H1 (cell line): ENCODE measurements at regions of chr5 and their contacts with region 1.

Region 1: GRCh38 chr5:141960449-141961202 is 2.6 kb upstream of the PCDH12 start:
- DNase-seq: peak; percentile 50 to 92
- H3K4me3 ChIP-seq: no peak overlapping the region
- H3K27ac ChIP-seq: no peak overlapping the region
- H3K4me1 ChIP-seq: peaks cover 2 to 9% (median 9%) of the 10 kb centered on the region in 4 experiments; a peak in 6 of 7 replicates
- H3K27me3 ChIP-seq: no peaks in the 10 kb centered on the region; a peak in 1 of 7 replicates
- CTCF ChIP-seq: peak; percentile 80 to 91 (median 88)
- EP300 ChIP-seq: no peak
- POLR2A ChIP-seq: no peak
- RAD21 ChIP-seq: peak; percentile 87

Region 2: GRCh38 chr5:141681695-141682641 is 278.7 kb before region 1 on chr5 and contains the start of gene ARAP3:
- CTCF ChIA-PET with region 1: interaction called, 18 read pairs
- POLR2A ChIA-PET with region 1: interaction called, 5 read pairs
- DNase-seq: peak in 1 of 2 experiments; percentile 88
- H3K4me3 ChIP-seq: peak within 1 kb of the TSS; percentile 60 to 73 (median 67)
- H3K27ac ChIP-seq: peak within 1 kb of the TSS; percentile 37; the same call in 1 of the 2 replicates
- H3K4me1 ChIP-seq: peaks cover 10 to 29% (median 20%) of the 10 kb centered on the region in 4 experiments
- H3K27me3 ChIP-seq: no peaks in the 10 kb centered on the region
- CTCF ChIP-seq: no peak
- EP300 ChIP-seq: no peak
- POLR2A ChIP-seq: no peak
- RAD21 ChIP-seq: no peak
- total RNA-seq, gene ARAP3: 45.7 and 48.6 TPM in 2 replicates

Region 3: DNA sequence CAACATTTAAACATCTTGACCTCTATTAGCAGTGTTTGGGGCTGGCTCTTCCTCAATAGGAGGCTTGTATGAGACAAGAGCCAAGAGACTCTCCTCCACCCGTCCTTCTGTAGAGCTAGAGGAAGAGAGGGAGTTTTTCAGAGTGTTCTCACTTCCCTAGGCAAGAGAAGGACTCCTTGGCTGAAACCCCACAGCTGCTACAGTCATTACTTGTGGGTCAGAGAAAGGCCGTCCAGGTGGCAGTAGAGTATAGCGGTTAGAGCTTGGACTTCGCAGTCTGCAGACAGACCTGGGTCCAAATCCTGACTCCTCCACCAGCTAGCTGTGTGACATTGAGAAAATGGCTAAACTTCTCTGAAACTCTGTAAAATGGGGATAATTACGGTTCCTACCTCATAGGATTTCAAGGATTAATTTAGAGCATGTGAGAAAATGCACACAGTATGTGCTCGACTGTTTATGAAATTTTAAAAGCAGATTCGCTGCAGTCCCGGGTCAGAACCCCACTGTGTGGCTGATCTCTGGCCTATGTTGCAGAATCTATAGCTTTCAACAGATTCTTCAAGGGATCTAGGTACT is 197.7 kb before region 1 on chr5:
- CTCF ChIA-PET with region 1: interaction called, 10 read pairs
- POLR2A ChIA-PET with region 1: no interaction called
- DNase-seq: no peak
- H3K4me3 ChIP-seq: no peak overlapping the region
- H3K27ac ChIP-seq: no peak overlapping the region
- H3K4me1 ChIP-seq: peaks cover 10 to 24% (median 21%) of the 10 kb centered on the region in 4 experiments
- H3K27me3 ChIP-seq: no peaks in the 10 kb centered on the region; a peak in 1 of 7 replicates
- CTCF ChIP-seq: peak in 1 of 3 experiments; percentile 18; a peak in 1 of 4 replicates
- EP300 ChIP-seq: no peak
- POLR2A ChIP-seq: no peak
- RAD21 ChIP-seq: peak; percentile 37 to 58; a peak in 3 of 4 replicates

Region 4: GRCh38 chr5:141914199-141914743 is 46.4 kb before region 1 on chr5:
- CTCF ChIA-PET with region 1: interaction called, 30 read pairs
- POLR2A ChIA-PET with region 1: interaction called, 3 read pairs
- DNase-seq: peak in 1 of 2 experiments; percentile 77
- H3K4me3 ChIP-seq: peak overlapping the region; percentile 5 to 64 (median 47)
- H3K27ac ChIP-seq: no peak overlapping the region
- H3K4me1 ChIP-seq: peaks cover 4 to 10% (median 6%) of the 10 kb centered on the region in 4 experiments; a peak in 6 of 7 replicates
- H3K27me3 ChIP-seq: peaks cover 3 to 17% (median 7%) of the 10 kb centered on the region in 4 experiments
- CTCF ChIP-seq: peak in 2 of 3 experiments; percentile 12 to 13; a peak in 3 of 4 replicates
- EP300 ChIP-seq: 0 out of 3 replicates have a peak, but pooled peaks of 1 of the 2 experiments have one; percentile 21
- POLR2A ChIP-seq: peak in 1 of 2 experiments; percentile 50; a peak in 1 of 3 replicates
- RAD21 ChIP-seq: peak; percentile 36 to 45; a peak in 3 of 4 replicates

Region 5: DNA sequence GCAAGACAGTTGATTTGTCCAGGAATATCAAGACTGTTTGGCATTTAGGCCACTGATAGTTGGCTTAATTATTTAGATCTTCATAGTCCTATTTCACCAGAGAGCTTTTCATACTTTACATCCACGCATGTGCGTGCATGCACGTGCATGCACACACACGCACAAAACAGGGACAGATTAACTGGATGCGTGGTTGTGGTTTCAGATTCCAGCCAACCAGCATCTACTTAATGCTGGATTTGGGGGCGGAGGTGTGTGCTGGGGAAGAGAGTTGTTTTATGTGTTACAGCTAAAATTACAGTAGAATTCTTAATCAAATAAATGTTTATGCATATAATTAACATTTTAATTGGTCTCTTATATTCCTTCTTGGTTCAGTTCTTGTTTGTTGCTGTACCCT is 15.6 kb after region 1 on chr5:
- CTCF ChIA-PET with region 1: interaction called, 15 read pairs
- POLR2A ChIA-PET with region 1: no interaction called
- DNase-seq: no peak
- H3K4me3 ChIP-seq: no peak overlapping the region
- H3K27ac ChIP-seq: no peak overlapping the region
- H3K4me1 ChIP-seq: no peaks in the 10 kb centered on the region
- H3K27me3 ChIP-seq: no peaks in the 10 kb centered on the region
- CTCF ChIP-seq: no peak
- EP300 ChIP-seq: no peak
- POLR2A ChIP-seq: no peak
- RAD21 ChIP-seq: no peak